PC-3 (cell line): ENCODE measurements at regions of chr1 and their contacts with region 1.

Region 1: GRCh38 chr1:155893389-155894142 is 17.6 kb downstream of the RIT1 start:
- DNase-seq: peak; percentile 97
- ATAC-seq: peak; percentile 86
- H3K4me3 ChIP-seq: peak overlapping the region; percentile 46
- H3K27ac ChIP-seq: peak overlapping the region; percentile 91
- H3K4me1 ChIP-seq: peaks cover 30% of the 10 kb centered on the region
- H3K27me3 ChIP-seq: no peaks in the 10 kb centered on the region
- CTCF ChIP-seq: no peak

Region 2: GRCh38 chr1:155946633-155947219 is 53.2 kb after region 1 on chr1:
- CTCF ChIA-PET with region 1: no interaction called
- POLR2A ChIA-PET with region 1: no interaction called
- intact Hi-C with region 1: no loop called
- DNase-seq: no peak
- ATAC-seq: no peak
- H3K4me3 ChIP-seq: no peak overlapping the region
- H3K27ac ChIP-seq: no peak overlapping the region
- H3K4me1 ChIP-seq: peaks cover 14% of the 10 kb centered on the region
- H3K27me3 ChIP-seq: no peaks in the 10 kb centered on the region
- CTCF ChIP-seq: no peak

Region 3: GRCh38 chr1:156012051-156012817 is 118.7 kb after region 1 on chr1:
- CTCF ChIA-PET with region 1: no interaction called
- POLR2A ChIA-PET with region 1: no interaction called
- intact Hi-C with region 1: no loop called
- DNase-seq: no peak
- ATAC-seq: no peak
- H3K4me3 ChIP-seq: no peak overlapping the region
- H3K27ac ChIP-seq: no peak overlapping the region
- H3K4me1 ChIP-seq: peaks cover under 1% of the 10 kb centered on the region; the same call in 1 of the 2 replicates
- H3K27me3 ChIP-seq: no peaks in the 10 kb centered on the region
- CTCF ChIP-seq: no peak

Region 4: DNA sequence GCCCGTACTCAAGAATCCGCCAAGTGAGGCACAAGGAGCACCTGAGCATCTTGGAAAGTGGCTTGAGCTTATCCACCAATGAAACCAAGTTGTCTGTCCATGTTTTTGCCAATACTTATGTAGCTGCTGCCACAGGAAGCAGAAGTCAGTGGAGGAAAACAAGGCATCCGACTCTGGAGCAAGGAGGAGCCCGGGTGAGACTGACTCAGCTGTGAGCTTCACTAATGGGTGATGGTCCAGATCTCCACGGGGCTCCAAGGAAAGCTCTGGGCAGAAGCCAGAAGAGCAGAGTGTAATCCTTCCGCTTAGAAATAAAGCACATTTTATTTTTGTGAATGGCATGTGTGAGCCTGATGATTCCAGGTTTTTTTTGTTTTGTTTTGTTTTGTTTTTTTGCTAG is 139.4 kb after region 1 on chr1:
- CTCF ChIA-PET with region 1: no interaction called
- POLR2A ChIA-PET with region 1: interaction called, 42 read pairs
- intact Hi-C with region 1: no loop called
- DNase-seq: no peak
- ATAC-seq: no peak
- H3K4me3 ChIP-seq: no peak overlapping the region
- H3K27ac ChIP-seq: no peak overlapping the region
- H3K4me1 ChIP-seq: no peaks in the 10 kb centered on the region
- H3K27me3 ChIP-seq: no peaks in the 10 kb centered on the region
- CTCF ChIP-seq: no peak

Region 5: GRCh38 chr1:156126043-156126700 is 232.6 kb after region 1 on chr1:
- CTCF ChIA-PET with region 1: no interaction called
- POLR2A ChIA-PET with region 1: no interaction called
- intact Hi-C with region 1: no loop called
- DNase-seq: peak; percentile 99
- ATAC-seq: peak; percentile 48
- H3K4me3 ChIP-seq: peak overlapping the region; percentile 58
- H3K27ac ChIP-seq: peak overlapping the region; percentile 98
- H3K4me1 ChIP-seq: peaks cover 92% of the 10 kb centered on the region
- H3K27me3 ChIP-seq: no peaks in the 10 kb centered on the region
- CTCF ChIP-seq: peak; percentile 55

Region 6: GRCh38 chr1:156506450-156506849 is 612.9 kb after region 1 on chr1:
- CTCF ChIA-PET with region 1: no interaction called
- POLR2A ChIA-PET with region 1: interaction called, 13 read pairs
- intact Hi-C with region 1: no loop called
- DNase-seq: no peak
- ATAC-seq: no peak
- H3K4me3 ChIP-seq: no peak overlapping the region
- H3K27ac ChIP-seq: no peak overlapping the region
- H3K4me1 ChIP-seq: peaks cover 43% of the 10 kb centered on the region
- H3K27me3 ChIP-seq: no peaks in the 10 kb centered on the region
- CTCF ChIP-seq: no peak